ENCODE measurements at regions of chr6 and their contacts with region 1.

Region 1: DNA sequence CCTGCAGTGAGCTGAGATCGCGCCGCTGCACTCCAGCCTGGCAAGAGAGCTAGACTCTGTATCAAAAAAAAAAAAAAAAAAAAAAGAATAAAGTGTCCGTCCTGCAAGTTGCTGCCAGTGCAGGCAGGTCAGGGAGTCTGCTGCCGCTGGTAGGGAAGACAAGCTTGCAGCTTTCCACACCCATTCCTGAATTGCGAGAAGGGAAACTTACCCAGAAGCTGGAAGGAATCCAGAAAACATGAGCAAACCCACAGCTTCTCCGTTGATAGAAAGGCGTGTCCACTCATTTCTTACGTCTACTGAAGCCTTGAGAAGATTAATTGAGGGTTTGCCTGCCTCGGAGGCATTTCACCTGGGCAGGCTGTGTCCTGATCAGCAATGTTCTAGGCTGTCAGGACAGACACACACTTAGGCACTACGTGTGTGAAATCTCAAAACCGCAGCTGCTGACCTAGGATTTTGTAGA is 61.6 kb upstream of the DSP start:
- DNase-seq: peak; percentile 40
- H3K4me3 Mint-ChIP-seq: peak overlapping the region; percentile 40
- H3K27ac Mint-ChIP-seq: no peak overlapping the region
- H3K4me1 Mint-ChIP-seq: no peaks in the 10 kb centered on the region
- H3K27me3 Mint-ChIP-seq: no peaks in the 10 kb centered on the region
- CTCF ChIP-seq: no peak

Region 2: GRCh38 chr6:7431674-7432390 is 48.0 kb before region 1 on chr6:
- CTCF ChIA-PET with region 1: no interaction called
- intact Hi-C with region 1: no loop called
- DNase-seq: no peak
- H3K4me3 Mint-ChIP-seq: no peak overlapping the region
- H3K27ac Mint-ChIP-seq: no peak overlapping the region
- H3K4me1 Mint-ChIP-seq: no peaks in the 10 kb centered on the region
- H3K27me3 Mint-ChIP-seq: no peaks in the 10 kb centered on the region
- CTCF ChIP-seq: no peak

Region 3: GRCh38 chr6:7532230-7532629 is 52.4 kb after region 1 on chr6:
- CTCF ChIA-PET with region 1: no interaction called
- intact Hi-C with region 1: loop called (anchors 5 kb)
- DNase-seq: peak; percentile 69
- H3K4me3 Mint-ChIP-seq: no peak overlapping the region
- H3K27ac Mint-ChIP-seq: no peak overlapping the region
- H3K4me1 Mint-ChIP-seq: no peaks in the 10 kb centered on the region
- H3K27me3 Mint-ChIP-seq: no peaks in the 10 kb centered on the region
- CTCF ChIP-seq: no peak